Activated CD4-positive, alpha-beta T cell treated with anti-CD3 and anti-CD28 coated beads, Interleukin-2, amount 10 ng/mL, durations not matched to agents 24 days and 14 days (primary cell): ENCODE measurements at regions of chr5 and their contacts with region 1.

Region 1: GRCh38 chr5:66002415-66002814 is 76.0 kb downstream of the ERBIN start:
- DNase-seq: no peak
- H3K4me3 Mint-ChIP-seq: no peak overlapping the region
- H3K27ac Mint-ChIP-seq: no peak overlapping the region
- H3K4me1 Mint-ChIP-seq: peaks cover 14% of the 10 kb centered on the region
- H3K27me3 Mint-ChIP-seq: no peaks in the 10 kb centered on the region

Region 2: GRCh38 chr5:65708145-65708544 is 294.3 kb before region 1 on chr5:
- intact Hi-C with region 1: no loop called
- DNase-seq: no peak
- H3K4me3 Mint-ChIP-seq: no peak overlapping the region
- H3K27ac Mint-ChIP-seq: no peak overlapping the region
- H3K4me1 Mint-ChIP-seq: peaks cover 4% of the 10 kb centered on the region
- H3K27me3 Mint-ChIP-seq: no peaks in the 10 kb centered on the region

Region 3: DNA sequence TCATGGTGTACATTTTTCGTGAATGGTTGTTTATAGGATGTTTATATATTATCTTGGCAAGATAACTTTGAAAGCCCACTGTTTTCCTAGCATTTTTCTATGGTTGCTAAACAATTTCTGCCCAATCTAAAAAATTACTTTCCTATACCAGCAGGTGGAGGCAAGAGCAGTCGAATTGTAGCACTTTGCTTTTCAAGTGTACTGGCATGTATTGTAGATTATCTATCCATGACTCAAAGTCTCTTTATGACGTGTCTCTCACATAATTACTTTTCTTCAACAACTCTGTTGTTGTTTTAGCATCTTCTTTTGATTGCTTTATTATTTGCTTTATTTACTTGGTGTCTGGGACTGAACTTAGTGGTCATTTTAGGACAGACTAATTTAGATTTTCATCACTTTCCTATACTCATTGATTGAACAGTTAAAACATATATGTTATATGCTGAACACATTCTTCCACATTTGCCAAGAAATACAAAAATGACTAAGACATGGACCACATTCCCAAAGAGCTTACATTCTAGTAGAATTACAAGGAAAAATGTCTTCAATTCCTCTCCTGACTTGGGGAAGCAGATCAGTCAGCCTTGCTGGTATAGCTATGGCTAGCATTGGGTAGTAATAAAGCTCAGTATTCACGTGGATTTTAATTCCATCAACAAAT is 259.7 kb before region 1 on chr5:
- intact Hi-C with region 1: loop called (anchors 1 kb)
- DNase-seq: peak; percentile 72
- H3K4me3 Mint-ChIP-seq: no peak overlapping the region
- H3K27ac Mint-ChIP-seq: no peak overlapping the region
- H3K4me1 Mint-ChIP-seq: peaks cover 8% of the 10 kb centered on the region
- H3K27me3 Mint-ChIP-seq: no peaks in the 10 kb centered on the region

Region 4: GRCh38 chr5:66074901-66075300 is 72.5 kb after region 1 on chr5:
- intact Hi-C with region 1: loop called (anchors 2 kb)
- DNase-seq: no peak
- H3K4me3 Mint-ChIP-seq: no peak overlapping the region
- H3K27ac Mint-ChIP-seq: no peak overlapping the region
- H3K4me1 Mint-ChIP-seq: peaks cover 5% of the 10 kb centered on the region
- H3K27me3 Mint-ChIP-seq: no peaks in the 10 kb centered on the region

Region 5: GRCh38 chr5:66100851-66101250 is 98.4 kb after region 1 on chr5:
- intact Hi-C with region 1: no loop called
- DNase-seq: no peak
- H3K4me3 Mint-ChIP-seq: no peak overlapping the region
- H3K27ac Mint-ChIP-seq: no peak overlapping the region
- H3K4me1 Mint-ChIP-seq: no peaks in the 10 kb centered on the region
- H3K27me3 Mint-ChIP-seq: no peaks in the 10 kb centered on the region